Natural killer cell (primary cell): ENCODE measurements at regions of chr1 and their contacts with region 1.

Region 1: GRCh38 chr1:92599184-92599583 is 112.5 kb upstream of the GFI1 start:
- DNase-seq: peak in 1 of 2 donors; percentile 70
- ATAC-seq: peak in 2 of 3 donors; percentile 66 to 69
- H3K4me3 ChIP-seq: no peak overlapping the region
- H3K4me3 Mint-ChIP-seq: no peak overlapping the region
- H3K27ac ChIP-seq: no peak overlapping the region
- H3K27ac Mint-ChIP-seq: peak overlapping the region in 1 of 2 donors; percentile 42
- H3K4me1 ChIP-seq: no peaks in the 10 kb centered on the region
- H3K4me1 Mint-ChIP-seq: no peaks in the 10 kb centered on the region
- H3K27me3 ChIP-seq: no peaks in the 10 kb centered on the region
- H3K27me3 Mint-ChIP-seq: no peaks in the 10 kb centered on the region
- CTCF ChIP-seq: peak; percentile 65

Region 2: GRCh38 chr1:92310185-92310597 is 289.0 kb before region 1 on chr1:
- intact Hi-C with region 1: loop called (anchors 1 kb)
- DNase-seq: peak in 1 of 2 donors; percentile 69
- ATAC-seq: peak; percentile 56 to 78 (median 71)
- H3K4me3 ChIP-seq: no peak overlapping the region
- H3K4me3 Mint-ChIP-seq: no peak overlapping the region
- H3K27ac ChIP-seq: no peak overlapping the region
- H3K27ac Mint-ChIP-seq: no peak overlapping the region
- H3K4me1 ChIP-seq: peaks cover 19% of the 10 kb centered on the region
- H3K4me1 Mint-ChIP-seq: peaks cover 12 to 13% of the 10 kb centered on the region in 2 donors
- H3K27me3 ChIP-seq: no peaks in the 10 kb centered on the region
- H3K27me3 Mint-ChIP-seq: no peaks in the 10 kb centered on the region
- CTCF ChIP-seq: peak; percentile 80

Region 3: GRCh38 chr1:92577261-92577895 is 21.8 kb before region 1 on chr1:
- intact Hi-C with region 1: no loop called
- DNase-seq: no peak
- ATAC-seq: no peak
- H3K4me3 ChIP-seq: no peak overlapping the region
- H3K4me3 Mint-ChIP-seq: no peak overlapping the region
- H3K27ac ChIP-seq: no peak overlapping the region
- H3K27ac Mint-ChIP-seq: no peak overlapping the region
- H3K4me1 ChIP-seq: no peaks in the 10 kb centered on the region
- H3K4me1 Mint-ChIP-seq: peaks cover 4% of the 10 kb centered on the region in 2 donors
- H3K27me3 ChIP-seq: no peaks in the 10 kb centered on the region
- H3K27me3 Mint-ChIP-seq: no peaks in the 10 kb centered on the region
- CTCF ChIP-seq: no peak